Prostate gland (tissue), 2 donors: ENCODE measurements at regions of chr15 and their contacts with region 1.

Region 1: GRCh38 chr15:73601451-73602445 is 31.4 kb downstream of the NPTN start:
- DNase-seq: peak; percentile 58
- H3K4me3 ChIP-seq: no peak overlapping the region
- H3K27ac ChIP-seq: peak overlapping the region; percentile 54 to 57
- H3K4me1 ChIP-seq: peaks cover 12% of the 10 kb centered on the region
- H3K27me3 ChIP-seq: no peaks in the 10 kb centered on the region
- CTCF ChIP-seq: no peak
- POLR2A ChIP-seq: no peak

Region 2: GRCh38 chr15:73569370-73569769 is 32.4 kb before region 1 on chr15:
- intact Hi-C with region 1: loop called (anchors 2 kb)
- DNase-seq: no peak
- H3K4me3 ChIP-seq: no peak overlapping the region
- H3K27ac ChIP-seq: no peak overlapping the region
- H3K4me1 ChIP-seq: no peaks in the 10 kb centered on the region
- H3K27me3 ChIP-seq: no peaks in the 10 kb centered on the region
- CTCF ChIP-seq: no peak
- POLR2A ChIP-seq: no peak

Region 3: GRCh38 chr15:74322181-74323076 is 720.7 kb after region 1 on chr15:
- intact Hi-C with region 1: no loop called
- DNase-seq: peak; percentile 40
- H3K4me3 ChIP-seq: no peak overlapping the region
- H3K27ac ChIP-seq: no peak overlapping the region
- H3K4me1 ChIP-seq: no peaks in the 10 kb centered on the region
- H3K27me3 ChIP-seq: no peaks in the 10 kb centered on the region
- CTCF ChIP-seq: peak; percentile 31 to 85 (median 68)
- POLR2A ChIP-seq: no peak